Panc1 (cell line): ENCODE measurements at regions of chr15 and their contacts with region 1.

Region 1: GRCh38 chr15:97745465-97746071 is 214.9 kb upstream of the ARRDC4 start:
- DNase-seq: no peak
- ATAC-seq: no peak
- H3K4me3 ChIP-seq: no peak overlapping the region
- H3K27ac ChIP-seq: no peak overlapping the region
- H3K4me1 ChIP-seq: no peaks in the 10 kb centered on the region
- H3K27me3 ChIP-seq: no peaks in the 10 kb centered on the region
- CTCF ChIP-seq: peak; percentile 81

Region 2: DNA sequence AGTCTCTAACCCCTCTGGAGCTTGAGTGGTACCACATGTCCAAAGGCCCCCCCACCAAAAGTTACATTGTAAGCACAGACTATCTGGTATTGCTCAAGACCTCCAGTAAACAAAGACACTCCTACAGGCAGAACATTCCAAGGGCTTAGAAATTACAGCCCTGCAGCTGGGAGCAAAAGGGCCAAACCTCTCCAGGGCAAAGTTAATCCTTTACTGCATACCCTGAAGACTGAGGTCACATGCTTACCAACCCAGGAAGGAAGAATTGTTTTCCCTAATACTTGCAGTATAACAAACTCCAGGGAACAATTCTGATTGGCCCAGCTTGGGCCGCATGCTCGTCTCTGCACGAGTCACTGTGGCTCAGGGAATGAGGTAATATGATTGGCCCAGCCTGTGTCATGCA is 1681.2 kb before region 1 on chr15:
- CTCF ChIA-PET with region 1: no interaction called
- POLR2A ChIA-PET with region 1: no interaction called
- in situ Hi-C with region 1: no loop called
- intact Hi-C with region 1: loop called (anchors 10 kb)
- DNase-seq: no peak
- ATAC-seq: no peak
- H3K4me3 ChIP-seq: no peak overlapping the region
- H3K27ac ChIP-seq: no peak overlapping the region
- H3K4me1 ChIP-seq: no peaks in the 10 kb centered on the region
- H3K27me3 ChIP-seq: no peaks in the 10 kb centered on the region
- CTCF ChIP-seq: no peak

Region 3: GRCh38 chr15:97165205-97165604 is 580.4 kb before region 1 on chr15:
- CTCF ChIA-PET with region 1: no interaction called
- POLR2A ChIA-PET with region 1: interaction called, 10 read pairs
- in situ Hi-C with region 1: no loop called
- intact Hi-C with region 1: no loop called
- DNase-seq: no peak
- ATAC-seq: no peak
- H3K4me3 ChIP-seq: no peak overlapping the region
- H3K27ac ChIP-seq: no peak overlapping the region
- H3K4me1 ChIP-seq: no peaks in the 10 kb centered on the region
- H3K27me3 ChIP-seq: no peaks in the 10 kb centered on the region
- CTCF ChIP-seq: no peak